BJ (cell line): ENCODE measurements at regions of chr19 and their contacts with region 1.

Region 1: GRCh38 chr19:7959211-7959610 is 15.7 kb upstream of the TIMM44 start:
- DNase-seq: no peak
- H3K4me3 ChIP-seq: no peak overlapping the region
- H3K27me3 ChIP-seq: no peaks in the 10 kb centered on the region
- CTCF ChIP-seq: no peak

Region 2: DNA sequence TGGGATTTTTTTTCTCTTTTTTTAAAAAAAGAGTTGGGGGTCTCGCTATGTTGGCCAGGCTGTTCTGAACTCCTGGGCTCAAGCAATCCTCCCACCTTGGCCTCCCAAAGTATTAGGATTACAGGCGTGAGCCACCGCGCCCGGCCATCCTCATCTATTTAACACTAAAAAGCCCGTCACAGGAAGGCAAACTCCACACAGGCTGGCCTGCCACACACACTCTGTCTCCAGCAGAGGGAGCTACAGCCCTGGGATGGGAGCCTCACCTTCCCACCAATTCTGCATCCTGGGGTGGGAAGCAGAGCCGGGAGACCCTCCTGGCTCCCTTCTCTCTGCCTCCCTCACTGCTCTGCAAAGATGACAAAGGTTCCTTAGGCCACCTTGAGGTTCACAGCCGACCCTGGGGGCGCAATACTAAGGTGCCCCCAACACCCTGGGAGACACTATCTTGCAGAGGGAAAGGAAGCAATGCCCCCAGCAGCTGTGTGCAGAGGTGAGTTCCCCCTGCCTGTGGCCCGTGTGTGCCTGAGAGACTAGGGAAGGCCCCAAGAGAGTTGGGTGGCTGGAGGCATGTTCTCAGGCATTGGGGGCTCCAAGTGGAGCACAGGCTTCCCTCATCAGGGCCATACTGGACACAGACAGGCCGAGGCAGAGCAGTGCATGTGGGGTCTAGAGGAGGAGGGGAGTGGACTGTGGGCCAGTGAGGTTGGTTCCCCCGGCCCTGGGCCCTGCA is 11.7 kb after region 1 on chr19:
- CTCF ChIA-PET with region 1: interaction called, 16 read pairs
- POLR2A ChIA-PET with region 1: no interaction called
- DNase-seq: no peak
- H3K4me3 ChIP-seq: no peak overlapping the region
- H3K27me3 ChIP-seq: no peaks in the 10 kb centered on the region
- CTCF ChIP-seq: peak; percentile 83